ENCODE measurements at regions of chr3 and their contacts with region 1.

Region 1: GRCh38 chr3:57992452-57993213 is 15.6 kb upstream of the FLNB start:
- DNase-seq: no peak
- ATAC-seq: no peak
- H3K4me3 ChIP-seq: no peak overlapping the region
- H3K27ac ChIP-seq: no peak overlapping the region; the same call in 1 of the 2 replicates
- H3K4me1 ChIP-seq: no peaks in the 10 kb centered on the region
- H3K27me3 ChIP-seq: no peaks in the 10 kb centered on the region
- CTCF ChIP-seq: no peak

Region 2: DNA sequence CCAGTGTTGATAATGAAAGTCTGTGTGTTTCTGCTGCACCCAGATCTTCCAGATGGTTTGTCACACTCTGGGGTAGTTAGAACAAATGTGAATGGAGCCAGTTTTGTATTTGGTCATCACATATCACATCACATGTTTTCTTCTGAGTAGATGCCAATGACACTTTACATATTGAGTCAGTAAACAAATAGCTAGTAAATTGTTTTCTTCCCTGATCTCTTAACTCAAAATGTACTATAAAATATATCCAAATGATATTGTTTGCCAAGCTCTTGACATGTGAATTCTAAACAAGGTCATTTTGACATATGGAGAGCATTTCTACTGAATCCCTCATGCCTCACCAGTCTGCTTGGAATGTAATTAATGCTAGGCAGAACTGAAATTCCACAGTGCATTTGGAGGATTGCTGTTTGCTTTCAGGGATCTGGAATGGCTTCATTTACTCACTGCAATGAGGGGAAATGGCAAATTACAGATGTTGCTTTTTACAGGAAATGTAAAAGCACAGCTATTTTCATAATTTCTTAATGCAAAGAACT is 396.0 kb after region 1 on chr3:
- CTCF ChIA-PET with region 1: no interaction called
- POLR2A ChIA-PET with region 1: interaction called, 15 read pairs
- in situ Hi-C with region 1: no loop called
- intact Hi-C with region 1: no loop called
- DNase-seq: peak; percentile 67
- ATAC-seq: peak; percentile 67
- H3K4me3 ChIP-seq: no peak overlapping the region
- H3K27ac ChIP-seq: peak overlapping the region; percentile 68
- H3K4me1 ChIP-seq: peaks cover 16% of the 10 kb centered on the region
- H3K27me3 ChIP-seq: no peaks in the 10 kb centered on the region
- CTCF ChIP-seq: no peak

Measured in Panc1 (cell line).